Motor neuron (in vitro differentiated cells): ENCODE measurements at regions of chr2 and their contacts with region 1.

Region 1: GRCh38 chr2:48912110-48912509 is 156.6 kb upstream of the LHCGR start:
- ATAC-seq: peak in 1 of 8 experiments; percentile 45
- H3K4me3 ChIP-seq: no peak overlapping the region
- H3K27ac ChIP-seq: no peak overlapping the region
- H3K4me1 ChIP-seq: peaks cover 0 to 4% of the 10 kb centered on the region in 2 donors

Region 2: DNA sequence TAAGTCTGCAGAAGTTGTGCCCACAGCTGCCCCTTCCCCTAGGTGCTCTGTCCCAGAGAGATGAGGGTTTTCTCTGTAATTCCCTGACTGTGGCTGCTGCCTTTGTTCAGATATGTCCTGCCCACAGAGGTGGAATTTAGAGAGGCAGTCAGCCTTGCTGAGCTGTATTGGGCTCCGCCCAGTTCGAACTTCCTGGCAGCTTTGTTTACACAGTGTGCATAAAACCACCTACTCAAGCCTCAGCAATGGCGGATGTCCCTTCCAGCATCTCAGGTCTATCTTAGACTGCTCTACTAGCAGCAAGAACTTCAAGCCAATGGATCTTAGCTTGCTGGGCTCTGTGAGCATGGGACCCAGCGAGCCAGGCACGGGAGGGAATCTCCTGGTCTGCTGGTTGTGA is 204.6 kb before region 1 on chr2:
- in situ Hi-C with region 1: no loop called
- ATAC-seq: peak in 7 of 8 experiments; percentile 8 to 89 (median 43)
- H3K4me3 ChIP-seq: no peak overlapping the region
- H3K27ac ChIP-seq: no peak overlapping the region
- H3K4me1 ChIP-seq: peaks cover 13% of the 10 kb centered on the region in 2 donors

Region 3: DNA sequence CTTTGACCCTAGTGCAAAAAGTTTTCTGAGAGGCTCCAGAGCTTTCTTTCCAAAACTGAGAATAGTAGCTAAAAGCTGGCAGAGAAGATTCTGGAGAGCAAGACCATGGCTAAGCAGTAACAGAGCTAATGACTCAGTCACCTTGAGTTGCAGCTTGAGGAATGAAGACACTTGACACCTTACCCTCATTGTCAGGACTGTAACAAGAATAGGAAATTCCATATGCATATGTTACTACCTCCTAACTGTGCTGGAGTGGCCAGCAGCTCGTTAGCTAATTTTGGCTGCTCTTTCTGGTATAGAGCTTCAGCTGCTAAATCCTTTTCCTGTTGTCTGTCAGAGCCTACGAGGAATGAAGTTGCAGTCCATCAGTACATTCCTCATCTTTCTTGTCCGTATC is 88.0 kb before region 1 on chr2:
- in situ Hi-C with region 1: loop called in 1 of 9 experiments (anchors 25 kb)
- ATAC-seq: peak in 1 of 8 experiments; percentile 49
- H3K4me3 ChIP-seq: no peak overlapping the region
- H3K27ac ChIP-seq: no peak overlapping the region
- H3K4me1 ChIP-seq: no peaks in the 10 kb centered on the region